GM12878 (cell line): ENCODE measurements at regions of chr1 and their contacts with region 1.

Region 1: GRCh38 chr1:211514030-211514754 is 22.2 kb upstream of the RD3 start:
- DNase-seq: no peak
- ATAC-seq: peak; percentile 83
- H3K4me3 ChIP-seq: no peak overlapping the region
- H3K27ac ChIP-seq: no peak overlapping the region
- H3K4me1 ChIP-seq: peaks cover 41% of the 10 kb centered on the region
- H3K27me3 ChIP-seq: no peaks in the 10 kb centered on the region; a peak in 1 of 4 replicates
- CTCF ChIP-seq: peak; percentile 80 to 90 (median 82)
- EP300 ChIP-seq: no peak
- POLR2A ChIP-seq: no peak
- RAD21 ChIP-seq: peak; percentile 87

Region 2: DNA sequence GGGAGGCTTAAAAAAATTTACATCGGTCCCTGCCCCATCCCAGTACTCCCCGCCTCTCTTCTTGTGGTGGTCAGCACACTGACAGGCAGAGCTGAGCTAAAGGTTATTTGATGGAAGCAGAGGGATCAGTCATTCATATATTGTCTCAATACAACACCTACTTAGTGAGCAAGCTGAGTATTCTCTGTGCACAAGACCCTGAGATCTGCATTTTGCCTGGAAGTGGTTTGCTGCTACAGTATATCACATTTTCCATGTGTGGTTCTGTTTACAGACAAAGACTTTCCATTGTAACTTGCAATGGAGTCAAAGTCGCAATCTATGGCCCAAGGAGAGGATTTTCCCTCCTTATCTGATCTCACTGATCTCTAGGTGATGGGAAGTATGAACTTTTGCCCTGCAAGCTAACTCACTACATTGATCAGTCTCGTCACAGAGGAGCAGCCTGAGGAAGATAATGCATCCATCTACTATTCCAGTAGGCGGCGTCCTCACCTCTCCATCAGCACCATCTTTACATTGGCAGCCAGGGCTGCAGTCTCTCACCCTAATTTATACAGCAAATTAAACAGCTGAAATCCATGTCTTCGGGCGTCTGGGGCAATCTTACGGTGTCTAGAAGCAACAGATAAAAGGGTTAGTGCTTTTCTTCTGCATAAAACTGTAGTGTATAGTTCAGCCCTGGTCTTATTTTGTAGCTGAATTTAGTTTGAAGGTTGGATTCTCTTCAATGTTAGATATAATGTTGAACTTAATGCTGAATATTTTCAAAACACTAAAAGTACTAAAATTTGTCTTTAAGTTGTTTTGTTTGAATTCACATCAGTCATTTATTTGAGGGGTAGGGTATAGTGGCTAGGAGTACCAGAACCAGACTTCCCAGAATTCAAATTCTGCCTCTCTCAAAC is 190.8 kb before region 1 on chr1:
- CTCF ChIA-PET with region 1: interaction called, 99 read pairs
- POLR2A ChIA-PET with region 1: interaction called, 3 read pairs
- RAD21 ChIA-PET with region 1: interaction called, 4 read pairs
- SMC1A ChIA-PET with region 1: interaction called, 17 read pairs
- in situ Hi-C with region 1: loop called (anchors 10 kb)
- intact Hi-C with region 1: loop called (anchors 1 kb)
- DNase-seq: no peak
- ATAC-seq: peak; percentile 73
- H3K4me3 ChIP-seq: no peak overlapping the region
- H3K27ac ChIP-seq: no peak overlapping the region
- H3K4me1 ChIP-seq: peaks cover 12% of the 10 kb centered on the region
- H3K27me3 ChIP-seq: no peaks in the 10 kb centered on the region
- CTCF ChIP-seq: peak; percentile 89 to 97 (median 93)
- EP300 ChIP-seq: no peak
- POLR2A ChIP-seq: no peak
- RAD21 ChIP-seq: peak; percentile 91

Region 3: GRCh38 chr1:211469938-211470529 is 44.2 kb before region 1 on chr1:
- CTCF ChIA-PET with region 1: interaction called, 30 read pairs
- POLR2A ChIA-PET with region 1: interaction called, 3 read pairs
- RAD21 ChIA-PET with region 1: interaction called, 11 read pairs
- SMC1A ChIA-PET with region 1: interaction called, 47 read pairs
- in situ Hi-C with region 1: no loop called
- intact Hi-C with region 1: loop called (anchors 1 kb)
- DNase-seq: no peak
- ATAC-seq: peak; percentile 94
- H3K4me3 ChIP-seq: no peak overlapping the region
- H3K27ac ChIP-seq: no peak overlapping the region
- H3K4me1 ChIP-seq: no peaks in the 10 kb centered on the region
- H3K27me3 ChIP-seq: peaks cover 0 to 3% of the 10 kb centered on the region in 2 experiments; a peak in 1 of 4 replicates
- CTCF ChIP-seq: peak; percentile 79 to 93 (median 85)
- EP300 ChIP-seq: no peak
- POLR2A ChIP-seq: no peak
- RAD21 ChIP-seq: peak; percentile 37

Region 4: DNA sequence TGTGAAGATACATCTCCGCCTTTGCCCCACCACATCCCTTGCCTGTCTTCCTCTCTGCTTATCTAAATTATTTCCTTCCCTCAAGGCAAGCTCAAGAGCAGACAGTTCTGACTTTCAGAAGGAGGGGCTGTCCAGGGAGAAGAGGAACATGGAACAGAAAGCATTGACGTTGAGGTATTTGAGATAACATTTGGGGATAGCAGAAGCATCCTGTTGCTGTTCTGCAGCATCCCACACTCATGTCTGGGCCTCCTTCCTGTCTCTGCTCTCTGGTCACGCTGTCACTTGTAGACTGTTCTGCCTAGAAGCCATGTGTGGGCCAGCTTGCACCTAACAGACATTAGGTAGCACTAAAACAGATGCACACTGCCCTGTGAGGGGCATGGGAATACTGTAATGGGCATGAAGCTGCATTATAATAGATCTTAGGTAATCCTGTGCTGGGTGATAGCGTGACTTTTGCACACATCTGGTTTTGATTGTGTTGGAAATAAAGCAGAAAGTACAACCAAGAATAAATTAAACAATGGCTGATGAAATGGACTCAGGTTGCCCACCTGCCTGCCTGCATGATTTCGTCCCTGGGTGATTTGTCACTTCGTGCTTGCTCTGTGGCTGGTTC is 21.6 kb before region 1 on chr1:
- CTCF ChIA-PET with region 1: interaction called, 13 read pairs
- POLR2A ChIA-PET with region 1: no interaction called
- RAD21 ChIA-PET with region 1: no interaction called
- SMC1A ChIA-PET with region 1: interaction called, 3 read pairs
- in situ Hi-C with region 1: no loop called
- intact Hi-C with region 1: no loop called
- DNase-seq: no peak
- ATAC-seq: no peak; the same call in 2 of the 3 replicates
- H3K4me3 ChIP-seq: no peak overlapping the region
- H3K27ac ChIP-seq: no peak overlapping the region
- H3K4me1 ChIP-seq: no peaks in the 10 kb centered on the region
- H3K27me3 ChIP-seq: peaks cover 0 to 2% of the 10 kb centered on the region in 2 experiments; a peak in 1 of 4 replicates
- CTCF ChIP-seq: no peak
- EP300 ChIP-seq: no peak
- POLR2A ChIP-seq: no peak
- RAD21 ChIP-seq: no peak

Region 5: GRCh38 chr1:211571998-211572397 is 57.8 kb after region 1 on chr1:
- CTCF ChIA-PET with region 1: interaction called, 12 read pairs
- POLR2A ChIA-PET with region 1: no interaction called
- RAD21 ChIA-PET with region 1: interaction called, 4 read pairs
- SMC1A ChIA-PET with region 1: interaction called, 10 read pairs
- in situ Hi-C with region 1: no loop called
- intact Hi-C with region 1: loop called (anchors 2 kb)
- DNase-seq: no peak
- ATAC-seq: peak; percentile 61
- H3K4me3 ChIP-seq: no peak overlapping the region
- H3K27ac ChIP-seq: peak overlapping the region; percentile 42; the same call in 1 of the 2 replicates
- H3K4me1 ChIP-seq: peaks cover 10% of the 10 kb centered on the region
- H3K27me3 ChIP-seq: no peaks in the 10 kb centered on the region
- CTCF ChIP-seq: no peak
- EP300 ChIP-seq: no peak
- POLR2A ChIP-seq: no peak
- RAD21 ChIP-seq: no peak

Region 6: GRCh38 chr1:211625040-211625439 is 110.8 kb after region 1 on chr1:
- CTCF ChIA-PET with region 1: interaction called, 9 read pairs
- POLR2A ChIA-PET with region 1: no interaction called
- RAD21 ChIA-PET with region 1: interaction called, 13 read pairs
- SMC1A ChIA-PET with region 1: interaction called, 4 read pairs
- in situ Hi-C with region 1: no loop called
- intact Hi-C with region 1: no loop called
- DNase-seq: no peak
- ATAC-seq: peak; percentile 85
- H3K4me3 ChIP-seq: no peak overlapping the region
- H3K27ac ChIP-seq: no peak overlapping the region
- H3K4me1 ChIP-seq: no peaks in the 10 kb centered on the region
- H3K27me3 ChIP-seq: no peaks in the 10 kb centered on the region
- CTCF ChIP-seq: peak; percentile 30 to 60 (median 35); a peak in 4 of 6 replicates
- EP300 ChIP-seq: no peak
- POLR2A ChIP-seq: no peak
- RAD21 ChIP-seq: peak; percentile 42

Region 7: GRCh38 chr1:211654838-211655787 is 140.9 kb after region 1 on chr1:
- CTCF ChIA-PET with region 1: interaction called, 37 read pairs
- POLR2A ChIA-PET with region 1: no interaction called
- RAD21 ChIA-PET with region 1: interaction called, 14 read pairs
- SMC1A ChIA-PET with region 1: interaction called, 21 read pairs
- in situ Hi-C with region 1: loop called (anchors 5 kb)
- intact Hi-C with region 1: loop called (anchors 1 kb)
- DNase-seq: no peak
- ATAC-seq: peak; percentile 99
- H3K4me3 ChIP-seq: no peak overlapping the region
- H3K27ac ChIP-seq: no peak overlapping the region
- H3K4me1 ChIP-seq: no peaks in the 10 kb centered on the region
- H3K27me3 ChIP-seq: peaks cover 0 to 2% of the 10 kb centered on the region in 2 experiments; a peak in 1 of 4 replicates
- CTCF ChIP-seq: peak; percentile 90 to 97 (median 94); a peak in 5 of 6 replicates
- EP300 ChIP-seq: no peak
- POLR2A ChIP-seq: no peak
- RAD21 ChIP-seq: peak; percentile 98

Region 8: GRCh38 chr1:211788626-211789025 is 274.4 kb after region 1 on chr1:
- CTCF ChIA-PET with region 1: no interaction called
- POLR2A ChIA-PET with region 1: no interaction called
- RAD21 ChIA-PET with region 1: no interaction called
- SMC1A ChIA-PET with region 1: no interaction called
- in situ Hi-C with region 1: no loop called
- intact Hi-C with region 1: no loop called
- DNase-seq: no peak
- ATAC-seq: no peak
- H3K4me3 ChIP-seq: no peak overlapping the region
- H3K27ac ChIP-seq: no peak overlapping the region
- H3K4me1 ChIP-seq: no peaks in the 10 kb centered on the region
- H3K27me3 ChIP-seq: no peaks in the 10 kb centered on the region
- CTCF ChIP-seq: no peak
- EP300 ChIP-seq: no peak
- POLR2A ChIP-seq: no peak
- RAD21 ChIP-seq: no peak